Dorsolateral prefrontal cortex (tissue), 120 donors: ENCODE measurements at regions of chr9 and their contacts with region 1.

Region 1: GRCh38 chr9:117411548-117411947 is 3.3 kb downstream of the ASTN2 start:
- DNase-seq: peak; percentile 49 to 85 (median 70)
- H3K4me3 ChIP-seq: peak overlapping the region in 48 of 59 donors; percentile 14 to 91 (median 78)
- H3K27ac ChIP-seq: peak overlapping the region in 8 of 59 donors; percentile 1 to 71 (median 40)
- H3K27me3 ChIP-seq: no peaks in the 10 kb centered on the region
- CTCF ChIP-seq: peak; percentile 69 to 92 (median 84)

Region 2: DNA sequence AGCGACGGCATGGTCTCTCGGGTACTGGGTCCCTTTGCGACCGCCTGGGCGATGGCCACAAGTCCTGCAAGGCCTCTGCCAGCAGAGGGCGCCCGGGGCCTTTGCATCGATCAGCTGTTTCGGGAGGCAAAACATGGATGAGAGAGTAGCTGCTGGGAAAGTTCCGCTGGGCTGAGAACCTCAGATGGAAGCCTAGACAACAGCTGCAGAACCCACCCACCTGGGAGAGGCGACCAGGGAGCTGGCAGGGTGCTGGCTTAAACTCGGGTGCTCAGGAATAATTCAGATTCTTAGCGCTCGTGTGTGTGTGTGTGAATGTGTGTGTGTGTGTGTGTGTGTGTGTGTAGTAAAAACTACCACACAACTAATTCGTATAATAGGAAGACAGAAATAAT is 674.4 kb before region 1 on chr9:
- intact Hi-C with region 1: loop called in 1 of 2 experiments (anchors 10 kb)
- DNase-seq: peak; percentile 79 to 92 (median 88)
- H3K4me3 ChIP-seq: peak overlapping the region in 3 of 59 donors; percentile 18 to 38 (median 27)
- H3K27ac ChIP-seq: peak overlapping the region in 1 of 59 donors; percentile 6
- H3K27me3 ChIP-seq: no peaks in the 10 kb centered on the region
- CTCF ChIP-seq: peak; percentile 66 to 95 (median 88)

Region 3: DNA sequence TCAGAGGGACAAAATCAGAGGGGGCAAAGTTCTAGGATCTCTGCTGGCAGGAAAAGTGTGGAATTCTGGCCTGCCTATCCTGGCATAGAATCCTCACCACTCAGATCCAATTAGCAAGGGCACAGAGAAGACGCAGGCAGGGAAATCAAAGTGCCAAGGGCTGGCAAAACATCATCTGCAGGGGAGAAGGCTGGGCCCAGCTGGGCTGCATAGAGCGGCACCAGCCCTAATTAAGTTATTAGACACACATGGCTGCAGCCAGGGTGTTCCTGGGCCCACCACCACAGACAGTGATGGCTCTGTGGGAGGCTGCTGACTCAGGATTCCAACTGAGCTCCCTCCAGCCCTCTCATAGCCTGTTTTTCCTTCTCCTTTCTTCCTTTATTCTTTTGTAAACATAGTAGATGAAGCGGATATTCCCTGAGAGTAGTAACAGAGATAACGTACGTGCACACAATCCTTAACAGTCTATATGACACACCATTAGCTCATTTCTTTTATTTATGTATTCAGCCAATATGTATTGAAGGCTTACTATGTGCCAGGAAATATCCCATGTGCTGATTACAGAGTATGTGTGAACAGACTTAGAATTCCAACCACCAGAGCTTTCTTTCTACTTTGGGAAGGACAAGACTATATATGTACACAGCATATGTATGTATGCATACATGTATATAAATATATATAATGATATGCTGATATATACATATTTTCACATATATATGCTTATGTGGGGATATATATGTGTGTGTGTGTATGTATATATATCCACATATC is 232.8 kb before region 1 on chr9:
- intact Hi-C with region 1: loop called in 1 of 2 experiments (anchors 5 kb)
- DNase-seq: peak in 6 of 10 donors; percentile 14 to 58 (median 42)
- H3K4me3 ChIP-seq: no peak overlapping the region
- H3K27ac ChIP-seq: peak overlapping the region in 2 of 59 donors; percentile 3 to 13
- H3K27me3 ChIP-seq: no peaks in the 10 kb centered on the region
- CTCF ChIP-seq: no peak

Region 4: DNA sequence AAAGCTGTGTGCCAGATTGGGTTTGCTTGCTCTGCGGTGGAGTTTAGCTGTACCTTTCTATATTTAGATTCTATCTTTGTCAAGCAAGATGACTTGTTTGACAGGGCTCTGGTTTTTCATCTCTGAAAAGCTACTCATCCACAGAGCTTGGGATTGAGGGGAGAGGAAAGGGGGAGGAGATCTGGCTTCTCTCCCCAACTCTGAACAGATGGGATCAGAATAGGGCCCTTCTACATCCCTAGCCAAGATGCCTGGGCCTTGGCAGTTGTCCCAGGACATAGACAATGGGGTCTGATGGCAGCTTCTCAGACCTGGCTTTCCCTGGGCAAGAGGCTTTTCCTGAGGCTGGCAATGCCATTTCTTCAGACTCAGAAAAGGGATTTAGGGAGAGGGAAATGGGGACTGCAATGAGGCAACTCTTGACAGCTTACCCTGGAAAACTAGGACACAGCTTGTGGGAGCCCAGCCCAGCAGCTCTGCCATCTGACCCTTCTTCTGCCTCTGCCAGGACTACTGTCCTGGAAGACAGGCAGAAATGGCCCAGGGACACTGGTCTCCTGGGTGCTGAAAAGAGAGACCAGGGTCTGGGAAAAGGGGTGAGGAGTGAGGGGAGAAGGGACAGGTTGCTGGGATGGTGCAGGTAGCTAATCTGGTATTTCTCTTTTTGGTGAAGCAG is 53.5 kb after region 1 on chr9:
- intact Hi-C with region 1: loop called (anchors 2 to 5 kb)
- DNase-seq: peak; percentile 74 to 95 (median 88)
- H3K4me3 ChIP-seq: peak overlapping the region in 1 of 59 donors; percentile 18
- H3K27ac ChIP-seq: peak overlapping the region; percentile 51 to 97 (median 89)
- H3K27me3 ChIP-seq: no peaks in the 10 kb centered on the region
- CTCF ChIP-seq: peak in 9 of 56 donors; percentile 8 to 37 (median 20)

Region 5: GRCh38 chr9:117541181-117541580 is 129.6 kb after region 1 on chr9:
- intact Hi-C with region 1: loop called in 1 of 2 experiments (anchors 5 kb)
- DNase-seq: no peak
- H3K4me3 ChIP-seq: no peak overlapping the region
- H3K27ac ChIP-seq: no peak overlapping the region
- H3K27me3 ChIP-seq: no peaks in the 10 kb centered on the region
- CTCF ChIP-seq: no peak